A549 (cell line): ENCODE measurements at regions of chr6 and their contacts with region 1.

Region 1: DNA sequence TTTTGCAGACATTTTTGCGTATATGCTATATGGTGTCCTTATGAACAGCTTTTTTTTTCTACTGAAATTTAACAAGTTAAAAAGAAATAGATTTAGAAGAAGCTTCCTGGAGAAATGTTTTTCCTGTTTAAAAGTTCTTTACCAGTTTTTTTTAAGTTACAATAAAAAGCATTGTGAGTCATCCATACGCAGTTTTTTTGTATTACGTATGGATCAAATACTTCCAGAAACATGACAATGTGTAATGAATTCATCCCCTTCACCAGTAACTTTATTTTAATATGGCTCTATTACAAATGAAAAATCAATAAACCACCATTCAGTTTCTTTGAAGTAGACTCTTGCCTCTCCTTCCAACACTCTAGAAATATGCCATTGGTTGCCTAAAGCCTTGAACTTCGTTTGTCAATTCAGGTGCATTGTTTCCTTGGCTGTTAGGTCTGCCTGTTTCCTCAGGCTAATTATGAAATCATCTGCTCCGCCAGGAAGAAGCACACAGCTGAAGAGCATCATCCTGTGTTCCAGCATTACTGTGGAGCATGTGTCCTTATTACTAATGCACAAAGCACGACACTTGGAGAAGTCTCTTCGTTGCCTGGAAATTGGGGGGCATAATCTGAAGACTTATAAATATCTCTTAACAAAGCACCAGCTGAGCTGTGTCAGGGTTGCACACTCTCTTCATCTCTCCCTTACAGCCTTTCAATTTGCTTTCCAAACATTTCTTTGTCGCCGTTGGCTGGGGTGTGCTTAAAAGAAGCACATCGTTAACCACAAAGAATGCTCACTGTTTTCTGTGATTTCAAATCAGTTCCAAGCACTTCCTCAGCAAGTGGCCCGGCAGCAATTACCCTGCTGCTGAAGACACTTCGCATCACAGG is 9.6 kb downstream of the MOXD1 start:
- DNase-seq: no peak
- ATAC-seq: no peak
- H3K4me3 ChIP-seq: no peak overlapping the region
- H3K27ac ChIP-seq: no peak overlapping the region
- H3K4me1 ChIP-seq: no peaks in the 10 kb centered on the region
- CTCF ChIP-seq: no peak
- EP300 ChIP-seq: no peak
- POLR2A ChIP-seq: no peak
- RAD21 ChIP-seq: no peak

Region 2: GRCh38 chr6:132300323-132300949 is 91.2 kb before region 1 on chr6:
- CTCF ChIA-PET with region 1: interaction called, 32 read pairs
- POLR2A ChIA-PET with region 1: no interaction called
- DNase-seq: peak; percentile 16 to 53
- ATAC-seq: peak; percentile 87 to 88; a peak in 5 of 6 replicates
- H3K4me3 ChIP-seq: no peak overlapping the region
- H3K27ac ChIP-seq: no peak overlapping the region
- H3K4me1 ChIP-seq: no peaks in the 10 kb centered on the region
- CTCF ChIP-seq: peak; percentile 75
- EP300 ChIP-seq: no peak
- POLR2A ChIP-seq: no peak
- RAD21 ChIP-seq: peak; percentile 87 to 88

Region 3: DNA sequence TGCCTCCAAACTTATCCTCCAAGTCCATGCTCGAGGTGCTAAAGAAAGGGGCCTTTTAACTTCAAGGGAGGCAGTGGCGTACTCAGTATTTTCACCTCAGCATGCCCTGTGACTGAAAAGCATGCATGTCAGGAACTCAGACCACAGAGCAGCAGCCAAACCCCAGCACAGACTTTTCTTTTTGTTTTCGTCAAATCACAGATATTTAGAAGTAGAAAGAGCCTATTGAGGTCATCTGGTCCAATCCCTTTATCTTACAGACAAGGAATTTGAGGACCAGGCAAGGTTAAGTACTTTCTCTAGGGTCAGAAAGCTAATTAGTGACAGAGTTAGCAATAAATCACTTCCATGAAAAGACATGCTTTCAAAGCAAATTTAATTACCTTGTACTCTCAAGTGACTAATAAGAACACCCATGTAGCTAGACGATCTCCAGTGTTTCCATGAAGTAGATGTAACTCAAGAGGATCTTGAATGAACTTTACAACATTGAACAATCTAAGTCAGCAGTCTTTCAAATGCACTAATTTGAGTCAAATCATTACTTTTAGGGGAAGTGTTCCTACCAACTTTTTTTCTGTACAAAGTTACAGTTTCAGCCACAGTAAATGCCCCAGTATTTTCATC is 26.2 kb before region 1 on chr6:
- CTCF ChIA-PET with region 1: no interaction called
- POLR2A ChIA-PET with region 1: no interaction called
- DNase-seq: no peak
- ATAC-seq: no peak
- H3K4me3 ChIP-seq: no peak overlapping the region
- H3K27ac ChIP-seq: no peak overlapping the region
- H3K4me1 ChIP-seq: no peaks in the 10 kb centered on the region
- CTCF ChIP-seq: no peak
- EP300 ChIP-seq: no peak
- POLR2A ChIP-seq: no peak
- RAD21 ChIP-seq: no peak

Region 4: DNA sequence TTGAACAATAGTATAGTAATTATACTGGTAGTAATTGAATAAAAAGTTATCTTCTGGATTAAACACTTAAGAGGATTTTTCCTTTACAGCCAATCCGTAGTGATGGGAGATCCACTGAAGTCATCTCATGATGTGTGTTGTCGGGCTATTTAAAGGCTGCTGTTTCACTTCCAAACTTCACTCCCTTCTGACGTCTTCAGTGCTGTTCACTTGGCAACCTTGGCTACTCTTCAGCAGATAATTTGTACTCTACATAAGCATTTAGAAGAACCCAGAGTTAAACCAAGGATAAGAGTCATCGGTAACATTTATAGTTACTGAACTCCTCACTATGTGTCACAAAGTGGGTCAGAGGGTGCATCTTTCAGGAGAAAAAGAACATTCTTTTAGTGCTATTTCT is 670.4 kb after region 1 on chr6:
- CTCF ChIA-PET with region 1: no interaction called
- POLR2A ChIA-PET with region 1: no interaction called
- DNase-seq: peak in 1 of 2 experiments; percentile 1
- ATAC-seq: no peak
- H3K4me3 ChIP-seq: no peak overlapping the region
- H3K27ac ChIP-seq: no peak overlapping the region
- H3K4me1 ChIP-seq: no peaks in the 10 kb centered on the region
- CTCF ChIP-seq: no peak
- EP300 ChIP-seq: no peak
- POLR2A ChIP-seq: no peak
- RAD21 ChIP-seq: no peak